Breast epithelium (tissue), 4 donors: ENCODE measurements at regions of chr3 and their contacts with region 1.

Region 1: GRCh38 chr3:114510201-114510600 is 216.4 kb downstream of the TIGIT start:
- DNase-seq: no peak
- H3K4me3 ChIP-seq: no peak overlapping the region
- H3K27ac ChIP-seq: no peak overlapping the region
- H3K4me1 ChIP-seq: no peaks in the 10 kb centered on the region
- H3K27me3 ChIP-seq: no peaks in the 10 kb centered on the region
- CTCF ChIP-seq: no peak
- POLR2A ChIP-seq: no peak

Region 2: DNA sequence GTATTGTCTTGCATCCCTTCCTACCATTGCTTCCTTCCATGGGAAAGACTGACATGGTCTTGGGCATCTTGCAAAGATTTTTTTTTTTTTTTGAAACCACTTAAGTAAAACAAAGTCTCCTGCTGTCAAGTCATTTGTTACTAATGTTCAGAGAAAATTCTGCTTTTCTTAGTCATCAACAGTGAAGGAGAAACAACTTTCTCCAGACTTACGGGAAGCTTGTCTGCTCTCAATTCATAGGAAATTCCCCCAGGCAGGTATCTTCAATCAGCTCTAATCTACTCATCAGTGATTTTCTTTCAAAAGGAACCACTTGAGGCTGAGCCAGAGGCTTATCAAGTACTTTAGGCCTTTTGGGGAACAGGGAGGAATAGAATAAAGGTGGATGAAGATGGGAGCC is 315.5 kb before region 1 on chr3:
- intact Hi-C with region 1: loop called (anchors 5 kb)
- DNase-seq: no peak
- H3K4me3 ChIP-seq: no peak overlapping the region
- H3K27ac ChIP-seq: no peak overlapping the region
- H3K4me1 ChIP-seq: no peaks in the 10 kb centered on the region
- H3K27me3 ChIP-seq: no peaks in the 10 kb centered on the region
- CTCF ChIP-seq: no peak
- POLR2A ChIP-seq: no peak